Left lung (tissue), 14 donors: ENCODE measurements at regions of chr12 and their contacts with region 1.

Region 1: DNA sequence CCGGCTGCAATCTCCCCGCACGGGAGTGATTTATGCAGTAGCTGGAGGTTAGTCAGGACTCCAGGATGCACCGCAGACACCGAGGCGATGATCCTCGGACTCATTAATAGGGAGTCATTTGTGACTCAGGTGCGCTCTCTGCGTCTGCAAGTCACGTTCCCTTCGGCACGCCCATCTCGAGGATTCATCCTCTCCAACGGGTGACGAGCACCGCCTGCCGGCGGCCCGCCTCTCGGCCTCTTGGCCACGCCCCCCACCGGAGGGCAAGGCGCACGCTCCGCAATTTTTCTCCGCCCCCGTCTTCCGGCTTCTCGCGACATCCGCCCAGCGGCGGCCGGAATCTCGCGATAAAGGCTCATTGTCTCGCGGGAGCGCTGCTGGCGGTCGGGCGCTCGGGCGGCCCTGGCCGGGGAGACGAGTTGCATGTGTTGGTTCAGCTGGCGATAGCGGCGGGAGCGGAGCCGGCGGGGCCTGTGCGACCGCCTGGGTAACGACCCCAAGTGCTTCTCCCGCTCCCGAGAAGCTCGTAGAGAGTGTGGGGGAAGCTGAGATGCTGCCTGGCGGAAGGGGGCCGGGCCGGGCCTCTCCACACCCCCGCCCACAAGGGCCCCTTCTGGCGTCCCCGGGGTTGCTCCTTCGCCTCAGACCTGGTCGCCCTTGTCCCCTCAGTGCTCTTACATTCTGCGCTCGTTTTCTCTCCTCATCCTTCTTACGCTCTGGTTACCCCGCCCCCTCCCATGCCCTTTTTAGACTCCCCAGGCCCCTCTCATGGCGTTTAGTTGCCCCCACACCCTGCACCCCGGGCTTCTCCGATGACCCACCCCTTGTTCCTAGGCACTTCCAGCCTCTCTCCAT is at the start of gene DENR:
- DNase-seq: peak; percentile 97 to 99 (median 98)
- ATAC-seq: peak; percentile 99
- H3K4me3 ChIP-seq: peak within 1 kb of the TSS; percentile 64 to 89
- H3K27ac ChIP-seq: peak within 1 kb of the TSS; percentile 78 to 84
- H3K4me1 ChIP-seq: peaks cover 7 to 39% of the 10 kb centered on the region in 2 donors
- H3K27me3 ChIP-seq: no peaks in the 10 kb centered on the region
- CTCF ChIP-seq: peak; percentile 61 to 86
- polyA plus RNA-seq, gene DENR: 83.4 to 102 (median 93.0) TPM

Region 2: DNA sequence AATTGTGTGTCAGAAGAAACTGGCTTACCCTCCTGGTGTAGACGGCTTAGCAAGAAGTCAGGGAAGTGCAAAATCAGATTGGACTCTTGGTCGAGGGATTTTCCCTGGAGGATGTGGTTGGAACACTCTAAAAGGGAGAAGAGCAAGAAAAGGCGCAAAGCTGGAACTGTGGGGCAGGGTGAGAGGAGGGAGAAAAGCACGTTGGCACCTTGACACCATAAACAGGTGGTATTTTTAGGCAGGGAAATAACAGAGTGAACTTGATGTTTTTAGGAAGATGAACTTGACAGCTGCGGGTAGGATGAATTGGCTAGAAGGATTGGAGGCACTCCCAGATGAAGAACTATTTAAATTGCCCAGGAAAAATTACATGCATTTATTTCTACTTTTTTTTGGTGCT is 117.2 kb before region 1 on chr12:
- intact Hi-C with region 1: loop called in 1 of 2 experiments (anchors 5 kb)
- DNase-seq: no peak
- ATAC-seq: no peak
- H3K4me3 ChIP-seq: no peak overlapping the region
- H3K27ac ChIP-seq: no peak overlapping the region
- H3K4me1 ChIP-seq: no peaks in the 10 kb centered on the region
- H3K27me3 ChIP-seq: no peaks in the 10 kb centered on the region
- CTCF ChIP-seq: no peak